ENCODE measurements at regions of chr12 and their contacts with region 1.

Region 1: GRCh38 chr12:57139796-57140649 is 7.4 kb downstream of the LRP1-AS start:
- DNase-seq: no peak
- H3K4me3 ChIP-seq: no peak overlapping the region
- CTCF ChIP-seq: no peak

Region 2: GRCh38 chr12:57069523-57069922 is 70.5 kb before region 1 on chr12:
- in situ Hi-C with region 1: loop called (anchors 5 kb)
- DNase-seq: peak; percentile 78
- H3K4me3 ChIP-seq: no peak overlapping the region
- CTCF ChIP-seq: peak; percentile 87

Measured in astrocyte of the cerebellum (primary cell).